ENCODE measurements at regions of chr15 and their contacts with region 1.

Region 1: GRCh38 chr15:72599855-72600464 is 54.5 kb upstream of the GOLGA6B start:
- DNase-seq: no peak
- ATAC-seq: peak; percentile 80
- H3K4me3 ChIP-seq: no peak overlapping the region
- H3K27ac ChIP-seq: no peak overlapping the region
- H3K4me1 ChIP-seq: no peaks in the 10 kb centered on the region
- H3K27me3 ChIP-seq: no peaks in the 10 kb centered on the region
- CTCF ChIP-seq: peak; percentile 50 to 62 (median 60)
- EP300 ChIP-seq: no peak
- POLR2A ChIP-seq: no peak
- RAD21 ChIP-seq: peak; percentile 56

Region 2: DNA sequence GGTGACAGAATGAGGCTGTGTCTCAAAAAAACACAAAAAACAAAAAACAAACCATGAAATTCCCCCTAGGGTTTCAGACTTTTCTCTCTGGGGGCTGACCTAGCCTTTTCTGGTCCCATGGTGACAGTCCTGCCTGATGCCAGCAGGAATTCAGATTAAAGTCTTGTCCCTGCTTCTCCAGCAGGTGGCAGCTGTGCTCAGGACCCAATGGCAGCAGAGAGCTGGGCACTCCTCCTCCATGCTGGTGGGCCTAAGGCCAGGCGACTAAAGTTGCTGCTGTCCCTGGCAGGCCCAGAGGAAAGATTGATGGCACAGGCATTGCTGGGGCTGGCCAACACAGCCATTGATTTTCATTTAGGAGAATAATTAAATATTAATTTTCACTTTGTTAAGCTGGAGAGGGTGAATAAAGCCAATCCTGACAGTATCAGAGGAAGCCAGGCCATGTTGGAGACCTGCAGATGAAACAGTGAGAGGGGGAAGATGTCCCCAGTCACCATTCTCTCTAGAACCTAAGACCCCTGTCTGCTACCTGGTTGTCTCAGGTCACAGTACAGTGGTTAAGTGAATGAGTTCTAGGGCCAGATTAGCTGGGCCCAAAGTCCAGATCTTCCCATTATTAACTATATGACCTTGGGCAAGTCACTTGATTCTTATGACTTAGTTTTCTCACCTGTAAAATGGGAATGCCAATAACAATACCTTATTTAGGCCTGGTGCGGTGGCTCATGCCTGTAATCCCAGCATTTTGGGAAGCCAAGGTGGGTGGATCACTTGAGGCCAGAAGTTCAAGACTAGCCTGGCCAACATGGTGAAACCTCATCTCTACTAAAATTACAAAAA is 287.1 kb before region 1 on chr15:
- CTCF ChIA-PET with region 1: interaction called, 13 read pairs
- POLR2A ChIA-PET with region 1: no interaction called
- RAD21 ChIA-PET with region 1: no interaction called
- SMC1A ChIA-PET with region 1: interaction called, 5 read pairs
- in situ Hi-C with region 1: no loop called
- intact Hi-C with region 1: no loop called
- DNase-seq: no peak
- ATAC-seq: peak; percentile 100
- H3K4me3 ChIP-seq: no peak overlapping the region
- H3K27ac ChIP-seq: no peak overlapping the region
- H3K4me1 ChIP-seq: no peaks in the 10 kb centered on the region
- H3K27me3 ChIP-seq: no peaks in the 10 kb centered on the region
- CTCF ChIP-seq: peak; percentile 81 to 89 (median 84)
- EP300 ChIP-seq: no peak
- POLR2A ChIP-seq: no peak
- RAD21 ChIP-seq: peak; percentile 85

Region 3: GRCh38 chr15:72534523-72534922 is 65.4 kb before region 1 on chr15:
- CTCF ChIA-PET with region 1: no interaction called
- POLR2A ChIA-PET with region 1: no interaction called
- RAD21 ChIA-PET with region 1: no interaction called
- SMC1A ChIA-PET with region 1: no interaction called
- in situ Hi-C with region 1: no loop called
- intact Hi-C with region 1: no loop called
- DNase-seq: no peak
- ATAC-seq: no peak
- H3K4me3 ChIP-seq: no peak overlapping the region
- H3K27ac ChIP-seq: no peak overlapping the region
- H3K4me1 ChIP-seq: no peaks in the 10 kb centered on the region
- H3K27me3 ChIP-seq: no peaks in the 10 kb centered on the region
- CTCF ChIP-seq: no peak
- EP300 ChIP-seq: no peak
- POLR2A ChIP-seq: no peak
- RAD21 ChIP-seq: no peak

Region 4: DNA sequence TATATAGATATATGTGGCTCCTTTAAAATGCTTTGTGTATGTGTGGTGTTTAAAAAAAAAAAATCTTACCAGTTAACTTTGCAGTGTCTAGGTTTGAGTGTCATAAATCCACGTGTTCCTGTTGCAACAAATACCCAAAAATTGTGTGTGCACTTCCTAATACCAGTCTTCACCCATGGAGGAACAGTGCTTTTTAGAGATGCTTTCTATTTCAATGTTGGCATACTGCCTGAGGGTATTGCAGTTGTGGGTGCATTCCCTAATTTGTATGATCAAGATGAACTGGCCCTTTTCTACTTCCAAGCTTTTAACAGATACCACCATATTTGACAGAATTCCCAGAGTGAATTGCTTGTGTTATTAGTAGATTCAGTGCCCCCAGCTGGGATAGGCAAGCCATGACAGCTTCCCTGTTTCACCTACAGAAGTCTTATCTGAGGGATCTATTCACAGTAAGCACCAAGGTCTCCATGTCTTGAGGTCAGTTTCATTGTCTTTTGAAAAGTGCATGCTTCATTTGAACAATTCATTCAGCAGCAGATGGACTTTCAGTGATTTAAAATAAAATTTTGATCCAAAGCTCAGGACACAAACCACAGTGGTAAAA is 14.4 kb before region 1 on chr15:
- CTCF ChIA-PET with region 1: interaction called, 45 read pairs
- POLR2A ChIA-PET with region 1: no interaction called
- RAD21 ChIA-PET with region 1: no interaction called
- SMC1A ChIA-PET with region 1: interaction called, 9 read pairs
- in situ Hi-C with region 1: no loop called
- intact Hi-C with region 1: no loop called
- DNase-seq: no peak
- ATAC-seq: no peak
- H3K4me3 ChIP-seq: no peak overlapping the region
- H3K27ac ChIP-seq: no peak overlapping the region
- H3K4me1 ChIP-seq: no peaks in the 10 kb centered on the region
- H3K27me3 ChIP-seq: no peaks in the 10 kb centered on the region
- CTCF ChIP-seq: peak in 1 of 3 experiments; percentile 23; a peak in 2 of 6 replicates
- EP300 ChIP-seq: no peak
- POLR2A ChIP-seq: no peak
- RAD21 ChIP-seq: no peak

Measured in GM12878 (cell line).